ENCODE measurements at regions of chr1 and their contacts with region 1.

Region 1: GRCh38 chr1:89762779-89763648 is 57.8 kb upstream of the LRRC8D start:
- DNase-seq: peak; percentile 91
- ATAC-seq: peak; percentile 100
- H3K4me3 Mint-ChIP-seq: peak overlapping the region; percentile 80
- H3K27ac Mint-ChIP-seq: peak overlapping the region; percentile 83
- H3K4me1 Mint-ChIP-seq: peaks cover 58% of the 10 kb centered on the region
- H3K27me3 Mint-ChIP-seq: no peaks in the 10 kb centered on the region

Region 2: GRCh38 chr1:89598450-89599331 is 164.3 kb before region 1 on chr1:
- CTCF ChIA-PET with region 1: interaction called, 19 read pairs
- DNase-seq: no peak
- ATAC-seq: peak; percentile 68
- H3K4me3 Mint-ChIP-seq: no peak overlapping the region
- H3K27ac Mint-ChIP-seq: peak overlapping the region; percentile 62
- H3K4me1 Mint-ChIP-seq: peaks cover 59% of the 10 kb centered on the region
- H3K27me3 Mint-ChIP-seq: no peaks in the 10 kb centered on the region

Region 3: DNA sequence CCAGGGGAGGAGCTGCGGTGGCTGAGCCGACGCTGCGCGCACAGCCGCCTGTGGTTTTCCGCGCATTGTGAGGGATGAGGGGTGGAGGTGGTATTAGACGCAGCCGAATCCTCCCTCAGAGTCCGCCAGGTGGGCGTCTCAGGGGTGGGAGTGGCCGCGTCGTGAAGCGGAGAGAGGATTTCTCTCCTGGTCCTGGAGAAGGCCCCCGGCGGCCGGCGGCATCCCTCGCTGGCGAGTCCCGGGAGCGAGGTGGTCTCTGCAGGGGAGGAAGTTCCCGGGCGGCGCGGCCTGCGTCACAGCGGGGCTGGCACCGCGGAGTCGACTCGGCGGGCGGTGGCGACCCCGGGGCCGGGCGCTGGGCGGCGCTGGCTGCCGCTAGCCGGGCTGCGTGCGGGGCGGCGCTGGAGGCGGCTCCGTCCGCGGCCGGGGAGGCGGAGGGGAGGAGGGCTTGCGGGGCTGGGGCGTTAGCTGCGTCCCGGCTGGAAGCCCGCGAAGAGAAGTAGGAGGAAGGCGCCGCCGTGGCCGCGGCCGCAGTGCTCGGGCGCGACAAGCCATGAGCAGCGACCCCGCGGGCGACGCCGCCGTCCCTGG is 130.3 kb before region 1 on chr1 and contains the start of gene LRRC8C:
- CTCF ChIA-PET with region 1: interaction called, 239 read pairs
- DNase-seq: peak; percentile 91
- ATAC-seq: peak; percentile 81
- H3K4me3 Mint-ChIP-seq: peak within 1 kb of the TSS; percentile 93
- H3K27ac Mint-ChIP-seq: peak within 1 kb of the TSS; percentile 94
- H3K4me1 Mint-ChIP-seq: peaks cover 72% of the 10 kb centered on the region
- H3K27me3 Mint-ChIP-seq: no peaks in the 10 kb centered on the region
- total RNA-seq, gene LRRC8C: 43.5 to 44.3 TPM

Region 4: DNA sequence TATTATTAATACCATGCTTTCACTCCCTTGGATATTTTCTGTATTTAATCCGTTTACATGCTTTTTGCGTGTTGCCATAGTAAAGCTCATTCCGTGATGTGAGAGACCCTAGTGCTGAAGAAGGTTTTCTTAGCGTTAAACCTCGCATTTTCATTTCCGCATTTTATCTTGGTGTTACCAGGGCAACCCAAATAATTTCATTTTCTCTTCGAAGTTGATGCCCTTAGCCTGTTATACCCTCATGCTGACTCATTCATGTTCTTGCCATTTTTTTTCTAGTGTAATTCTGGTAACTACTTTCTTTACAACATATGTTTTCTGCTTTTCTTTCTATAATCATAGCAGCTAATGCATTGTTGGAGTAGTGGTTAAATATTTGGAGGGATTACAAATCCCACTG is 92.9 kb before region 1 on chr1:
- CTCF ChIA-PET with region 1: interaction called, 24 read pairs
- DNase-seq: no peak
- ATAC-seq: peak; percentile 87
- H3K4me3 Mint-ChIP-seq: peak overlapping the region; percentile 60
- H3K27ac Mint-ChIP-seq: peak overlapping the region; percentile 81
- H3K4me1 Mint-ChIP-seq: peaks cover 85% of the 10 kb centered on the region
- H3K27me3 Mint-ChIP-seq: no peaks in the 10 kb centered on the region

Region 5: DNA sequence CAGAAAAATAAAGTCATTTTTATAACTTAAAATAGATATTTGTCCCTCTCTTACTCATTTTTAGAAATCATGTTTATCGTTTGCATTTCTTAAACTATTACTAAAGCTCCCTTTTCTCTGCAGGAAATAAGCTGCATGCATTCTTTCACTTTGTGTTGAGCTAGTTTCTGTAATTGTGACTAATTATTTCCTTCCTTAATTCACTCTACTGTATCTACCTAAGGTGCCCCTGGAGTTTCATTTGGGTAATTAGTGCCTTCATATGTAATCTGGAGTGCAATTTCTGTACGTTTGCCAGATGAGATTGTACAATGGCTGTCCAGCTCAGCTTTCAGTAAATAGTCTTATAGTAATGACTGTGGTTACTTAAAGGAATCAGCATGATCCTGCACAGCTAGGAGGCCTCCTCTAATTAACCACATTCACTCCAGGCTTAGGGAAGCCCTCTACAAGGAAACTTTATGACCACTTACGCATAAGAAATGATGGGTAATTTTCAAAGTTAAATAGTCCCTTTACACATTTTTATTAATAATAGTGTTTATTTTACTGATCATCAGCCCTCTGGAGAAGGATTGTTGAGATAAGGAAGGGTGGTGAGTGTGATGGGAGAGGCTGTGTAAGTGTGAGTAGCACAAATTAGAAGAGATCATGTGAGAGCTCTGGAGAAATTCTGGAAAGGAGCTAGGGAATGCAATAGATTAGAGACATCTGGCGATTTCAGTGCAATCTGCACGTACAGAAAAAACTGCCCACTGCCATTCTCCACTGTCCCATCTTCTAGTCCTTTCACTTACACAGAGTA is 43.3 kb before region 1 on chr1:
- CTCF ChIA-PET with region 1: interaction called, 62 read pairs
- DNase-seq: no peak
- ATAC-seq: peak; percentile 88
- H3K4me3 Mint-ChIP-seq: peak overlapping the region; percentile 60
- H3K27ac Mint-ChIP-seq: peak overlapping the region; percentile 99
- H3K4me1 Mint-ChIP-seq: peaks cover 85% of the 10 kb centered on the region
- H3K27me3 Mint-ChIP-seq: no peaks in the 10 kb centered on the region

Region 6: DNA sequence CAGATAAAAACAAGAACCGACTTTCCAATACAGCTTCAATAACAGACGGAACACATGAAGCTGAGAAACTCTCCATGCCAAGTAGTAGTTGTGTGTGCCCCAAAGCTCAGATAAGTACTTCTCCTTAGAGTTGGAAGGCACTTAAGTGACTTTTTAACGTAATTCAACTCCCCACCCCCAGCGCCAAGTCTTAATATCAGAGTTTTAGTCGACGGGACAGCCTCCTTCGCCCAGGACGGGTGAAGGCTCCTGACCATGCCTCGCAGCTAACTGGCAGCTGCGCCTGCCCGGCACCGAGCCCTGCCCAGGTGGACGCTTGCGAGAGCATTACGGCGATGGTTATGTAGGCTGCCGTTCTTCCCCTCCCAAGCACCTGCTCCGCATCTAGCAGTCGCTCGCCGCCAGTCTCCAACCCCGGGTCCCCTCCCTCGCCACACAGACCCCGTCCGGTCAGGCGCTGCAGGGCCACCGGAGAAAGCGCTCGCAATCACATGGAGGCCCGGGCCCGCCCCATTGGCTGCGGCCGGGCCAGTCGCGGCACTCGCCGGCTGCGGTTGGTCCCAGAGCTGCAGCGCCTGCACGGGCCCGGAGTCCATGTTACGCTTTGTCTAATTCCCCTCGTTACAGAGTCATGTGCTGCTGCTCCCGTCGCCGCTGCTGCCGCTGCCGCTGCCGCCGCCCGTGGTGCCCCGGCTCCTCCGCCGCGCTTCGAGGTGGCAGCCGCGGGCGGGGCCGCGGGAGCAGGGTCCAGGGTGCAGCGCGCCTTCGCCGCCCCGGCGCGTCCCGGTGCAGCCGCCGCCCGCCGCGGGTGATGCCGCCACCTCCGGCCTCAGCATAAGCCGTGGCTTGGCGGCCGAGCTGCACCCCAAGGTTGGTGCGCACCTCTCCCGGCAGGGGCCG is 57.7 kb after region 1 on chr1 and contains the start of gene LRRC8D:
- CTCF ChIA-PET with region 1: no interaction called
- DNase-seq: peak; percentile 78
- ATAC-seq: peak; percentile 83
- H3K4me3 Mint-ChIP-seq: peak within 1 kb of the TSS; percentile 76
- H3K27ac Mint-ChIP-seq: peak within 1 kb of the TSS; percentile 55
- H3K4me1 Mint-ChIP-seq: peaks cover 23% of the 10 kb centered on the region
- H3K27me3 Mint-ChIP-seq: peaks cover 8% of the 10 kb centered on the region
- total RNA-seq, gene LRRC8D: 19.2 to 27.7 TPM